Posterior vena cava (tissue), 2 donors: ENCODE measurements at regions of chr15 and their contacts with region 1.

Region 1: GRCh38 chr15:90790057-90790456 is 72.9 kb downstream of the BLM start:
- DNase-seq: no peak

Region 2: DNA sequence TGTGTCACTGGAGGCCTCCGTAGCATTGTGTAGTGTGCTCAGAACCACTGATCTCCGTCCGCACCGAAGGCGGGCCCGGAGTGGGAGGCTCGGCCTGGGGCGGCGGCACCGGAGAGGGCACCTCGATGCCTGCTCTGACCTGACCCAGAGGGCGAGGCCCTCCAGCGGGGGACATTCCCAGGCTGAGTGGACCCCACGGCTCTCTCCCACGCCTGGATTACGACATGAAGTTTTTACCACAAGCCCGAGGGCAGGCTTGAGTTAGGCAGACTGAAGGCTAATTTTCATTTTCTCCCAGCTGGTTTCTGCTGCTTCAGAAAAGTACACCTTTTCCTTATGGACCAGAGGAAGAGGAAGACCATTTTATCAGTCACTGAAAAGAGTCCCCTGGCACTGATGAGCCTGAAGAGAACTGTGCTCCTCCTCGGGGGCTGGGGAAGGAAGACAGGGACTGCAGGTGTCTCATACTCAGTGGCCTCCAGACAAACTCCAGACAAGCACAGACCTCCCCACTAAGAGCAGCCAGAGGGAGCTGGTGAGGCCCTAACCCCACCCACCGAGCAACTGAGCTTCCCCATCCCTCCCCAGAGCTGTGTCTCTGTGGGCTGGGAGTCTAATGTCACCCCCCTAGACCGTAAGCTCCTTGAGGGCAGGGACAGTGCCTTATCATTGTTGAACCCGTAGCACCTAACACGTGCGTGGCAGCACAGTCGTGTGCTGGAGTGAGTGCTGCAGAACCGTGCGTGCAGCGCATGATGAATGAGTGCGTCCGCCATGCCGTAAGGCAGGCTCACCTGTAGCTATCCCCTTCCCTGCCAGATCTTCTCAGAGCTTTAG is 147.4 kb before region 1 on chr15:
- intact Hi-C with region 1: no loop called
- DNase-seq: peak; percentile 78

Region 3: GRCh38 chr15:91813924-91814323 is 1023.9 kb after region 1 on chr15:
- intact Hi-C with region 1: loop called in 1 of 2 experiments (anchors 10 kb)
- DNase-seq: no peak